ENCODE measurements at regions of chr10 and their contacts with region 1.

Region 1: GRCh38 chr10:119207367-119207668 is at the start of gene GRK5:
- DNase-seq: peak; percentile 95
- ATAC-seq: peak; percentile 90
- H3K4me3 Mint-ChIP-seq: peak within 1 kb of the TSS; percentile 88
- H3K27ac Mint-ChIP-seq: peak within 1 kb of the TSS; percentile 96
- H3K4me1 Mint-ChIP-seq: peaks cover 35% of the 10 kb centered on the region
- H3K27me3 Mint-ChIP-seq: no peaks in the 10 kb centered on the region
- CTCF ChIP-seq: no peak
- total RNA-seq, gene GRK5: 14.8 to 15.6 TPM

Region 2: DNA sequence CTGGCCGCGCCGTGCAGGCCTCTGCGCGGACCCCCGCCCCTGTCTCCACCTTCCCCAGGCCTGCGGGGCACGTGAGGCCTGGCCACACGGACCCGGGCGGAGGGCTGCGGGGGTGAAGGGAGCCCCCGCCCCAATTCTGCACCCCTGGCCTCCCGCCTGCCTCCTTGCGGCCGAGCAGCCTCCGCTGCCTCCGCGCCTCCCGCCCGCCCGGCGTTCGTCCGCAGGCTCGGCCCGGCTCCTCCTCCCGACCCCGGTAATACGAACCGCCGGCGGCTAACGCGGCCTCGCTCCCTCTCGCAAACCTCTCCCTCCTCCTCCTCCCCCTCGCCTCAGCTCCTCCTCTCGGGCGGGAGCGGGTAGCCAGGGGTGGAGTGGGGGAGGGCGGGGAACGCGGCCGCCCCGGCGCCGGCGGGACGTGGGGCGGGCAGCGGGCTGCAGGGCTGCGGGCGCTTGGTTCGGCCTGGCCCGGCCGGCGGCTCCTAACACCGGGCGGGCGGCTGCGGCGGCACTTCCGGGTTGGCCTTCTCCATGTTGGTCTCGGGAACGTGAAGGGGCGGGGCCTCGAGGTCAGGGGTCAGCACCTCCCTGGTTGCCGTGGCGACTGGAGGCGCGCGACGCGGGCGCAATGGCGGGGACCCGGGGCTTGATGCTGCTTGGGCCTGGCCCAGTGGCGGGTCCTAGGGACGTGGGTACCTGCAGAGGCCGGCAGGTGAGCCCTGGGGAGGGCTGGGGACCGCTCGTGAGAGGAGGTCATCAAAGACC is 1160.7 kb before region 1 on chr10 and contains the start of gene RAB11FIP2:
- CTCF ChIA-PET with region 1: no interaction called
- POLR2A ChIA-PET with region 1: no interaction called
- intact Hi-C with region 1: no loop called
- DNase-seq: peak; percentile 97
- ATAC-seq: peak; percentile 95
- H3K4me3 Mint-ChIP-seq: peak within 1 kb of the TSS; percentile 94
- H3K27ac Mint-ChIP-seq: peak within 1 kb of the TSS; percentile 84
- H3K4me1 Mint-ChIP-seq: peaks cover 41% of the 10 kb centered on the region
- H3K27me3 Mint-ChIP-seq: no peaks in the 10 kb centered on the region
- CTCF ChIP-seq: no peak
- total RNA-seq, gene RAB11FIP2: 6.6 to 9.7 TPM

Region 3: GRCh38 chr10:119189811-119190282 is 17.5 kb before region 1 on chr10:
- CTCF ChIA-PET with region 1: interaction called, 21 read pairs
- POLR2A ChIA-PET with region 1: no interaction called
- intact Hi-C with region 1: no loop called
- DNase-seq: peak; percentile 35
- ATAC-seq: peak; percentile 40
- H3K4me3 Mint-ChIP-seq: no peak overlapping the region
- H3K27ac Mint-ChIP-seq: no peak overlapping the region
- H3K4me1 Mint-ChIP-seq: peaks cover 22% of the 10 kb centered on the region
- H3K27me3 Mint-ChIP-seq: no peaks in the 10 kb centered on the region
- CTCF ChIP-seq: no peak

Region 4: GRCh38 chr10:119299531-119299930 is 92.2 kb after region 1 on chr10:
- CTCF ChIA-PET with region 1: interaction called, 21 read pairs
- POLR2A ChIA-PET with region 1: interaction called, 27 read pairs
- intact Hi-C with region 1: no loop called
- DNase-seq: no peak
- ATAC-seq: no peak
- H3K4me3 Mint-ChIP-seq: no peak overlapping the region
- H3K27ac Mint-ChIP-seq: no peak overlapping the region
- H3K4me1 Mint-ChIP-seq: peaks cover 55% of the 10 kb centered on the region
- H3K27me3 Mint-ChIP-seq: no peaks in the 10 kb centered on the region
- CTCF ChIP-seq: no peak

Region 5: DNA sequence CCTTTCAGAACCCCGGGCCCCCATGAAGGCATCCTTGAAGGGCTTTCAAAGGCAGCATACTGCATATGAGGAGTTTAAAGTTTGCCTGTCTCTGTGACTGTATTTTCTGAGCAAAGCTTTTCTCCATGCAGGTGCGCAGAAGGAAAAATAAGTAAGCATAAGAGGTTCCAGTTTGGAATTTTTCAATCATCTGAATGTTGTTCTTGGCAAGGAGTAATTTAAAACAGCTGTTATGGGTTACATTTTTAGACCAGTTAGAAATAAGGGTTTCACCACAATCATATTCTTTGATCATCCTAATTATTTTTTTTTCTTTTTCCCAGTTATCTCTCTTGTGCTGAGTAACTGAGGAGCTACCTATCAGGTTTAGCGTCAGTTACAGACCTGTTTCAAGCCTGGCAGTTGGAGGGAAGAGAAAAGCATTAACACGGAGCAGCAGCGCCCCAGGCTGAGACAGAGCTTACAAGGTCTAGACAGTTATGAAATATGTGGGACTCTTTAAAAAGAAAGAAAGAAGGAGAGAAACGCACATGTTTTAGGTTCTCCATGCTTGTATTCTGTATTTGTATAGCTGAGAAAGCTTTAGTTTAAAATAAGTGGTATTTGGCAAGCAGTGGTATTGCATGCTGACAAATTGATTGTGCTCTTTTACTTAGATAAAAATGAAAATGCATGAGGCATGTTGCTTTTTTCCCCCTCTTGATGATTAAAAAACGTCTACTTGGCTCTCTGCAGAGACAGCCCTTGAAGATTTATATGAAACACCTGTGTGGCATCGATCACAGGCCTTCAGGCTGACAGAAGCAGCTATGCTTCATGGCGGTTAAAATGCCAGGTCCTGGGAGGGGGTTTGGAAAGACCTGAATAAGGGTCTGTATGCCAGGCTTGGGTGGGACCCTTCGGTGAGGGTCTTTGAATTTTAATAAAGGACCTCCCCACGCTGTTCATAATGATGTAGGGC is 157.6 kb after region 1 on chr10:
- CTCF ChIA-PET with region 1: interaction called, 11 read pairs
- POLR2A ChIA-PET with region 1: no interaction called
- intact Hi-C with region 1: no loop called
- DNase-seq: no peak
- ATAC-seq: no peak
- H3K4me3 Mint-ChIP-seq: no peak overlapping the region
- H3K27ac Mint-ChIP-seq: no peak overlapping the region
- H3K4me1 Mint-ChIP-seq: peaks cover 8% of the 10 kb centered on the region
- H3K27me3 Mint-ChIP-seq: no peaks in the 10 kb centered on the region
- CTCF ChIP-seq: no peak

Region 6: GRCh38 chr10:119445311-119445934 is 238.1 kb after region 1 on chr10:
- CTCF ChIA-PET with region 1: interaction called, 25 read pairs
- POLR2A ChIA-PET with region 1: no interaction called
- intact Hi-C with region 1: no loop called
- DNase-seq: peak; percentile 89
- ATAC-seq: peak; percentile 89
- H3K4me3 Mint-ChIP-seq: no peak overlapping the region
- H3K27ac Mint-ChIP-seq: no peak overlapping the region
- H3K4me1 Mint-ChIP-seq: peaks cover 11% of the 10 kb centered on the region
- H3K27me3 Mint-ChIP-seq: no peaks in the 10 kb centered on the region
- CTCF ChIP-seq: peak; percentile 93

Measured in activated CD8-positive, alpha-beta T cell treated with anti-CD3 and anti-CD28 coated beads for 36 hours (primary cell).